Activated T-helper 1 cell treated with anti-CD3 and anti-CD28 coated beads, Interleukin-12 subunit alpha, Interleukin-12 subunit beta, Interleukin-2, Interleukin-4 antibody, amounts not matched to agents 30 ng/mL and 10 ng/mL and 1 ng/mL, durations not matched to agents 14 hours and 24 hours and 36 hours (primary cell): ENCODE measurements at regions of chr6 and their contacts with region 1.

Region 1: DNA sequence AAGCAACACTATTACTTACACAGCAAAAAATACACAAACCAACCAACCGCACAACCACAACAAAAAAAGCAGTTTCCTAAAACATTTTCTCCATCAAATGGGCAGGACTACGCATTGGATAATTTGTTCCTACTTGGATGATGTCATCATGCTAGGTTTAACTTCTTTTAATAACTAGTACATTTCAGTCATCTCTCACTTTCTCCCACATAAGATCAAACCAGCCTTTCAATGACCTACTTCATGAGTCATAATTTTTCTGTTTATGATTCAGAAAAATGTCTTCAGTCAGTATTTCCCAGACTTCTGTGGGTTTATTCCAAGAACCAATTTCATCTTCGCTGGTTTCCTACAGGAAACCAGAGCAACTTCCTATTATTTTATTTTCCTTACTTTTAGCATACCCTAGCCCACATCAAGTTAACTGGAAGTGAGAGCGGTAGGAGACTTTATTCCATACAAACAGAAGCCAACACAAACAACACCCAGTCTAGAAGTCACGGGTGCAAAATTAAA is 134.2 kb downstream of the GMDS start:
- DNase-seq: no peak
- H3K4me3 Mint-ChIP-seq: peak overlapping the region; percentile 73
- H3K27ac Mint-ChIP-seq: peak overlapping the region; percentile 90
- H3K4me1 Mint-ChIP-seq: peaks cover 50% of the 10 kb centered on the region
- H3K27me3 Mint-ChIP-seq: peaks cover 2% of the 10 kb centered on the region

Region 2: GRCh38 chr6:903761-904160 is 1207.5 kb before region 1 on chr6:
- intact Hi-C with region 1: no loop called
- DNase-seq: no peak
- H3K4me3 Mint-ChIP-seq: no peak overlapping the region
- H3K27ac Mint-ChIP-seq: no peak overlapping the region
- H3K4me1 Mint-ChIP-seq: no peaks in the 10 kb centered on the region
- H3K27me3 Mint-ChIP-seq: peaks cover 6% of the 10 kb centered on the region

Region 3: DNA sequence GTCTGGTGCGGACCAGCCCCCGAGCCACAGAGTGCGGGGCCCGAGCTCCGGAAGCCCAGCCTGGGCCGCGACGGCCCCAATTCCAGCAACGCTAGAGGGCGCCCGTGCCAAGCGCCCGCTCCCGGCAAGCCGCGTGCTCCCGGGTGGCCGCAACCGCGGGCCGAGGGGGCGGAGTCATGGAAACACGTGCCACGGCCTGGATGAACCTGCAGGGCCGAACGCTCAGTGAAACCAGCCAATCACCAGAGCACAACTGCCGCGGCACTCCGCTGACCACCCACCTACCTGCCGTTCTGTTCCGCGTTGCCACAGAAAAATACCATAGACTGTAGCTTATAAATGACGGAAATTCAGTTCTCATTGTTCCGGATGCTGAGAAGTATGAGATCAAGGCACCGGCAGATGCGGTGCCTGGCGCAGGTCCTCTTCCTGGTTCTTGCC is 587.2 kb before region 1 on chr6:
- intact Hi-C with region 1: loop called (anchors 10 kb)
- DNase-seq: peak; percentile 70
- H3K4me3 Mint-ChIP-seq: no peak overlapping the region
- H3K27ac Mint-ChIP-seq: peak overlapping the region; percentile 41
- H3K4me1 Mint-ChIP-seq: peaks cover 44% of the 10 kb centered on the region
- H3K27me3 Mint-ChIP-seq: peaks cover 6% of the 10 kb centered on the region

Region 4: DNA sequence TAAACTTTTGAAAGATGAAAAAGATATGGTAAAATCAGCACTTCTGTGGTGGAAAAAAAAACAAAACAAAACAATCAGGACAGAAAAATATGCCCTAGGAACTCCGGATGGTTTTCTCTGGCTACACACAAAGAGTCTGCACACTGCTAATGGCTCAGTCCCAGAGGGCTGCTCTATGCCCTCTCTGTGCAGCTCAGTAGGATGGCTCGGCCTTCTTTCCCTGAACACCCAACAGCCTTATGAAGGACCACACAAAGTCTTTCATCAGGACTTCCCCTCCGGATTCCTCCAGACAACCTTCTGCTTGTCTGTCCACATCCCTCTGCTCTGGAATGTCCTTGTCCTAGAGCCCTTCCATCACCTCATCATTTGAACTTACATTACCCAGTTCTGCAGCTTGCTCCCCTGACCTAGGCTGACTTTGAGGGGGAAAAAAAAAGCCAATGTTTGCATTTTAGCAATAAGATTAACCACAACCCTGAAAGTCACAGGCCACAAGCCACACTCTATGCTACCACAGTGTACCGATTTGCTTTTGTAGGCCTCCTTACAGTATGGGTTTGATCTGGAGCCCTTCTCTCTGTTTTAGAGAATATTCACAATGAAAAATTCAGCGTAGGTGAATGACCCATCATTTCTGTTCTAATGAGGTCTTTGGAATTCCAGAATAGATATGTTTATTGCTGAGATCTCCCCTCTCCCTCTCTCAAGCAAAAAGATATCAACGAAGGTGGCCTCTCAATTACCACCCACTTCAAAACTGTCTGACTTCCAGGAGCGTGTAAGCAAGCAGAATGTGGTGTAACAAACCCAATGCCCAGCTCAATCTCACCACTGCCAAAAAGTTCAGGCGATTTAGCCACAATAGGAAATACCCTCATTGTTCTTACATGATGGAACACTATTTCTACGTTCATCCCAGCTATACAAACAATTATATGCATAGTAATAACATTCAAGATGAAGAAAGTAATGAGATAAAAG is 29.8 kb before region 1 on chr6:
- intact Hi-C with region 1: loop called (anchors 1 kb)
- DNase-seq: peak; percentile 35
- H3K4me3 Mint-ChIP-seq: peak overlapping the region; percentile 3
- H3K27ac Mint-ChIP-seq: peak overlapping the region; percentile 71
- H3K4me1 Mint-ChIP-seq: peaks cover 51% of the 10 kb centered on the region
- H3K27me3 Mint-ChIP-seq: peaks cover 5% of the 10 kb centered on the region

Region 5: GRCh38 chr6:2158596-2159271 is 47.5 kb after region 1 on chr6:
- intact Hi-C with region 1: loop called (anchors 1 kb)
- DNase-seq: no peak
- H3K4me3 Mint-ChIP-seq: no peak overlapping the region
- H3K27ac Mint-ChIP-seq: no peak overlapping the region
- H3K4me1 Mint-ChIP-seq: peaks cover 48% of the 10 kb centered on the region
- H3K27me3 Mint-ChIP-seq: no peaks in the 10 kb centered on the region

Region 6: DNA sequence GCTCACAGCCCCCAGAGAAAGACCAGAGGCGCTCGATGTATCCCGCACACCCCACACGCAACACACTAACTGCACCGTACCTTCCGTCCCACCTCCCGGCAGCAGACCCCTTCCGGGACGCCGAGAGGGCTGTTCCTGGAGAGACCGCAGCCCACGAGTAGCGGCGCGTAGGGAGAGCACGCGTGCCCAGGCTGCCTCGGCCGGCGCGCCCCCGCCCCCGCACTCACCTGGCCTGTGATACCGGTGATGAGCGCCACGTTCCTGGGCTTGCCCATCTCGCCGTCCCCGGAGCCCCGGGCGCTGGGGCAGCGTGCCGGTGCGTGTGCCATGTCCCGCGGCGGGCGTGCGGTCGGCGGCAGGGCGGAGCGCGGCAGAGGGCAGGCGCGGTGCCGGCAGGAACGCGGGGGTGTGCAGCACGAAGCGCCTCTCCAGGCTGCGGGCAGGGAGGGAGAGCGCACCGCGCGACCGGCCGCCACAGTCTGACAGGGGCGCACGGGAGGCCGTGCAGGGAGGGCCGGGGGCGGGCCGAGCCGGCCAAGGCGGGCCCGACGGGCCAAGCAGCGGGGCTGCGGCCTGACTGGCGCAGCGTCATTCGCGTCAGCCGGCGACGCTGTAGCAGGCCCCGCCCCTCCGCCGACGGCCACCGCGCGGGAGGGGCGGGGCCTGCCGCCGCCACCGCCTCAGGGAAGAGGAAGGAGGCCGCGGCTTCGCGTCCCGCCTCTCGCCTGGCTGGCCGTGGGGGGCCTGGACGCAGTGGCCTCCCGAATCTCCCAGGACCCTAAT is 134.1 kb after region 1 on chr6 and contains the start of gene GMDS:
- intact Hi-C with region 1: loop called (anchors 2 kb)
- DNase-seq: peak; percentile 82
- H3K4me3 Mint-ChIP-seq: peak within 1 kb of the TSS; percentile 92
- H3K27ac Mint-ChIP-seq: peak within 1 kb of the TSS; percentile 89
- H3K4me1 Mint-ChIP-seq: peaks cover 76% of the 10 kb centered on the region
- H3K27me3 Mint-ChIP-seq: no peaks in the 10 kb centered on the region
- total RNA-seq, gene GMDS: 44.5 and 53.4 TPM in 2 replicates

Region 7: DNA sequence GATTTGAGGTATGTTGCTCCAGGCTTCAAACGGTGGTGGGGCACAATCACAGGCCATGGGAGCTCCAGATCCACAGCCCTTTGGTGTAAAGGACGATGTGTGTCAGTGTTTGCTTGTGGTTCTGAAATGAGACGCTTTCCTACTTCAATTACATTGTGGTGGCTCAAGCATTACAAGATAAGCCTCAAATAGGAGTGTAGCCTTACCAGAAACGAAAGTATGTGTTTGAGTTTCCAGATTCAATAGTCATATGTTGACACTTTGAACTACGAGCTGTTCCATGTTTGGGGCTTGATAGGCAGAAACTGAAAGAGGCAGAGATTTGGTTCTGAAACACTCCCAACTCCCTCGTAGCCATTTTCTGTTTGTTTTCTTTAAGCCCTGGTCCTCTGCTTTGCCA is 452.4 kb after region 1 on chr6:
- intact Hi-C with region 1: loop called (anchors 1 kb)
- DNase-seq: peak; percentile 22
- H3K4me3 Mint-ChIP-seq: peak overlapping the region; percentile 13
- H3K27ac Mint-ChIP-seq: no peak overlapping the region
- H3K4me1 Mint-ChIP-seq: peaks cover 14% of the 10 kb centered on the region
- H3K27me3 Mint-ChIP-seq: peaks cover 56% of the 10 kb centered on the region